Endothelial cell of umbilical vein (primary cell): ENCODE measurements at regions of chr9 and their contacts with region 1.

Region 1: GRCh38 chr9:69672596-69673310 is 582 bp upstream of the APBA1 start:
- DNase-seq: peak; percentile 83
- H3K4me3 ChIP-seq: peak overlapping the region; percentile 49 to 69 (median 64)
- H3K27ac ChIP-seq: peak overlapping the region; percentile 30
- H3K4me1 ChIP-seq: peaks cover 36% of the 10 kb centered on the region
- H3K27me3 ChIP-seq: peaks cover 17% of the 10 kb centered on the region in 2 experiments
- CTCF ChIP-seq: peak; percentile 91 to 94
- POLR2A ChIP-seq: no peak

Region 2: DNA sequence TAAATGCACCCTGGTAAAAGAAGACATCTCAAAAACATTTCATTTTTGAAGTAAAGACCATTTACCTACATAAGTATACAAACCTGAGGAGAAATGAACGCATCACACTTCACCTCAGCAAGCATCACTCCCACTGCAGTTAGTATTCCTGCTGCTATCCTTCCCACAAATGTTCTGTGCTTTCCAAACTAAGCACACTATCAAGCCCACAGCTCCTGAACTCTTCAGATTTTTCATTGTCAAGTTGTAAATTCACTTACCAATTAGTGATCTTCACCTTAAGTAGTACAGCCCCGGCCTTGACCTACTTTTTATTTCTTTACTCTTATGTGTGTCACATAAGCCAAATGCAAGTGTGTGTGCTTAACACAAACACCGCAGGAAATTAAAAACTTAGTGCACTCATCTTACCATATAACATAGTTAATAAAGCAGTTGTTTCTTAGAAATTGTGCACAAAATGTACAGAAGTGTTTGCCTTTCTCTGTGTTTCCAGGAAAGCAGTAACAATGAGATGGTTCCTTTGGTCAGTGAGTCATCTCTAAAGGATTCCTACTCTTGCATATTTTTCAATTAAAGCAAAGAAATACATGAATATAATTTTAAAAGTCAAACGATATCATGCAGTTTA is 170.0 kb before region 1 on chr9:
- CTCF ChIA-PET with region 1: no interaction called
- POLR2A ChIA-PET with region 1: interaction called, 4 read pairs
- dilution Hi-C with region 1: no loop called
- intact Hi-C with region 1: loop called (anchors 5 kb)
- DNase-seq: peak; percentile 85
- H3K4me3 ChIP-seq: peak overlapping the region in 1 of 3 experiments; percentile 53
- H3K27ac ChIP-seq: peak overlapping the region; percentile 90
- H3K4me1 ChIP-seq: peaks cover 29% of the 10 kb centered on the region
- H3K27me3 ChIP-seq: no peaks in the 10 kb centered on the region
- CTCF ChIP-seq: no peak
- POLR2A ChIP-seq: no peak

Region 3: DNA sequence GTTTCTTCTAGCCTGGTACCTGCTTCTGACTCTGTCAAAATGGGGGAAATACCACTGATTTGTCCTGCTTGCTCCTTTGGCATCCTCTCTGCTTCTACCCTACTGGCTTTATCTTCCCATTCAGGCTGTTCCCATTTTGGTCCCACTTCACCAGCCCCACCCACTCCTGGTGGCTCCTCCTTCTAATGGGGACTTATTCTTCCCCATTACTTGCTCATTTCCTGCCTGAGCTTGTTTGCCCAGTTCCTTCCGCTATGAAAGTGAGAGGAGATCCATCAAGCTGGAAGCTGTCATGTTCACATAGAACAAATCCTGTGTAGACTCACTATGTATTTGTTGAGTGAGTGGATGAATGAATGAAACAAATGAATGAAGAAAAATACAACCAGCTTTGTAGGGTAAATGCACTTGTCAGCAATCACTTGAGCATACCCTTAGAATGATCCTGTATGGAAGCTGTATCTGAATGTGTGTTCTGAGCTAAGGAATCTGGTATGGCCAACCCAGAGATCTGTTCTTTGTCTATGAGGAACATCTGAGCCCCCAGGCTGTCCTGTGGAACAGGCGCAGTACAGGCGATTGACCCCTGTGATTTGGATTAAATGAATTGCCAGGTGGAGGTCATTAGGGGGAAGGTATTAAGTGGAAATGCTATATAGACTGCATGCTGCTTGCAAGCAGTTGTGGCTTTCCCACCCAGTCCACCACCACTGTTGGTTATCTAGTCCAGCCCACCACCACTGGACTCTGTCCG is 90.0 kb before region 1 on chr9:
- CTCF ChIA-PET with region 1: interaction called, 5 read pairs
- POLR2A ChIA-PET with region 1: no interaction called
- dilution Hi-C with region 1: no loop called
- intact Hi-C with region 1: loop called (anchors 1 kb)
- DNase-seq: peak; percentile 62
- H3K4me3 ChIP-seq: no peak overlapping the region
- H3K27ac ChIP-seq: peak overlapping the region; percentile 63
- H3K4me1 ChIP-seq: peaks cover 35% of the 10 kb centered on the region
- H3K27me3 ChIP-seq: no peaks in the 10 kb centered on the region
- CTCF ChIP-seq: no peak
- POLR2A ChIP-seq: no peak

Region 4: GRCh38 chr9:69745716-69746437 is 73.1 kb after region 1 on chr9:
- CTCF ChIA-PET with region 1: interaction called, 31 read pairs
- POLR2A ChIA-PET with region 1: no interaction called
- dilution Hi-C with region 1: no loop called
- intact Hi-C with region 1: no loop called
- DNase-seq: peak; percentile 34
- H3K4me3 ChIP-seq: no peak overlapping the region
- H3K27ac ChIP-seq: no peak overlapping the region
- H3K4me1 ChIP-seq: peaks cover 3% of the 10 kb centered on the region
- H3K27me3 ChIP-seq: no peaks in the 10 kb centered on the region
- CTCF ChIP-seq: peak in 1 of 2 donors; percentile 8
- POLR2A ChIP-seq: no peak

Region 5: DNA sequence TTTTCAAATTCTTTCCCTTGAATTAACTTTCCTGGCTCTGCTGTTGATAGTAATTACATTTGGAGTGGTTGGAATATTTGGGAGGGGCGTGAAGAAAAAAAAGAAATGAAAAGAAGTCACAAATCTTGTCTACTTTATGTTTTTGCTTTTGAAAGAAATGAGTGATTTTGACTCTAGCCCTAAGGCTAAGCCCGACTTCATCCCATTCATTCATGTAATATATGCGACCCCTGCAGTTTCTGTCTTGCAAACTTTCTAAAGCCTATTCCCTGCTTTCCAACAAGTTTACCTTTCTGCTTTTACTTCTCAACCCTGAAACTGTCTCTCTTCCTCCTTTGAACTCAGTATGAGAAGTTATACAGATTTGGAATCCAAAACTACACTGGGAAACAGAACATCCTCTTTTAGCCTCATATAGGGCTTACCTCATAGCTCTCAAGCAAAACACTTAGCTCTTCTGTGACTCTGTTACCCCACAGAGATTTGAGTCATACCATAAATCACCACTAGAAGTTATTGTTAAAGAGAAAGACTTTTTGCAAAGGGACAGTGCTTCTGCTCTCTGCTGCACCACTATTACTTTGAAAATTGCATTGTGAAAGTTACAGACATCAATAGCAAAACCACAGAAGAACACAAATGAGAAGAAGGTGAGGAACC is 149.5 kb after region 1 on chr9:
- CTCF ChIA-PET with region 1: no interaction called
- POLR2A ChIA-PET with region 1: no interaction called
- dilution Hi-C with region 1: no loop called
- intact Hi-C with region 1: loop called (anchors 2 kb)
- DNase-seq: no peak
- H3K4me3 ChIP-seq: no peak overlapping the region
- H3K27ac ChIP-seq: no peak overlapping the region
- H3K4me1 ChIP-seq: peaks cover 3% of the 10 kb centered on the region
- H3K27me3 ChIP-seq: peaks cover 71 to 87% of the 10 kb centered on the region in 2 experiments
- CTCF ChIP-seq: no peak
- POLR2A ChIP-seq: no peak

Region 6: DNA sequence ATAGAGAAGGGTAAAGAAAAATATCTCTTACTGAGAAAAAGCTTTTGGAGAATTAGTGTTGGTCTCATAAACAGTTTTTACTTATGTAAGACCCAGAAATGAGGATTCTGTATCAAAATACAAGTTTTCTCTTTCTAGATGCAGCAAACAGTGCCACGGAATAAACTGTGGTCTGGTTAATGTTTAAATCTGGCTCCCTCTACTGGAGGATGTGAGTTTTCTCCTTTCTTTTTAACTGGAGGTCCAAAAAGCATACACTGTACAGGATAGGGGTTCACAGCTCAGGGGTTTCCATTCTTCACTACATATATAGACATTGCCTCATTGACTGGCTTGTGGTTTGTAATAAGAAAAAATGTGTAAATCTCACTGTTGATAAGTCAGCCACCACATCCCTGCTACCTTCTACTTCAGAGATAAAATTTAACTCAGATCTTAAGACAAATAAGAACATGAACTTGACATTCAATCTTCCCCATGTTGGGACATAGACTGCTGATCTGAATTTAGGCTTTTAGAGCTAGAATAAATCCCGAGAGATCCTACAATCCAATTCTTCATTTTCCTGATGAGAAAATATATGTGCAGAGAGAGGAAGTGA is 246.8 kb after region 1 on chr9:
- CTCF ChIA-PET with region 1: interaction called, 52 read pairs
- POLR2A ChIA-PET with region 1: no interaction called
- dilution Hi-C with region 1: no loop called
- intact Hi-C with region 1: loop called (anchors 1 kb)
- DNase-seq: peak; percentile 60
- H3K4me3 ChIP-seq: no peak overlapping the region
- H3K27ac ChIP-seq: no peak overlapping the region
- H3K4me1 ChIP-seq: peaks cover 5% of the 10 kb centered on the region
- H3K27me3 ChIP-seq: peaks cover 29 to 39% of the 10 kb centered on the region in 2 experiments
- CTCF ChIP-seq: peak; percentile 49 to 53
- POLR2A ChIP-seq: no peak

Region 7: GRCh38 chr9:70258692-70259511 is 586.1 kb after region 1 on chr9 and contains the start of gene SMC5:
- CTCF ChIA-PET with region 1: no interaction called
- POLR2A ChIA-PET with region 1: no interaction called
- dilution Hi-C with region 1: no loop called
- intact Hi-C with region 1: loop called (anchors 1 kb)
- DNase-seq: peak; percentile 95
- H3K4me3 ChIP-seq: peak within 1 kb of the TSS; percentile 74 to 95 (median 87)
- H3K27ac ChIP-seq: peak within 1 kb of the TSS; percentile 93
- H3K4me1 ChIP-seq: peaks cover 40% of the 10 kb centered on the region
- H3K27me3 ChIP-seq: no peaks in the 10 kb centered on the region
- CTCF ChIP-seq: no peak
- POLR2A ChIP-seq: peak; percentile 95
- total RNA-seq, gene SMC5: 24.3 and 32.8 TPM in 2 replicates

Region 8: DNA sequence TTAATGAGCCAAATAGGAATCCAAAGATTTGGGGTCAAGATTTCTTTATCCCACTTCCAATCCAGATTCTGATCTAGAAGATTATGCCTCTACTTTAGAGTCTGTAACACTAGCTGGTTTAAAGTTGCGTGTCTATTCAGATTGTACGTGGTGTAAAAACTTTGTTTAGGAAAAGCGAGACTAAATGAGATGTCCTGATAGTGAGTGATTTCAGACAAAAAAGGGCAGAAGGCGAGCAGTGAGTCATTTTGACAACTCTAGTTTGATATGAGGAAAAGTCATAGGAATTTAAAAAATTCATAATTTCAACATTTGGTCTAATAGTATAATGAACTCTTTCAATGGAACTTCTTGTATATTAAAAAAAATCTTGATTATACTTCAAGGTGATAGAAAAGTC is 861.3 kb after region 1 on chr9:
- CTCF ChIA-PET with region 1: no interaction called
- POLR2A ChIA-PET with region 1: no interaction called
- dilution Hi-C with region 1: no loop called
- intact Hi-C with region 1: no loop called
- DNase-seq: peak; percentile 80
- H3K4me3 ChIP-seq: no peak overlapping the region
- H3K27ac ChIP-seq: peak overlapping the region; percentile 84
- H3K4me1 ChIP-seq: peaks cover 32% of the 10 kb centered on the region
- H3K27me3 ChIP-seq: no peaks in the 10 kb centered on the region
- CTCF ChIP-seq: no peak
- POLR2A ChIP-seq: no peak